Right ventricle myocardium inferior (tissue), 1 donor: ENCODE measurements at regions of chr2 and their contacts with region 1.

Region 1: DNA sequence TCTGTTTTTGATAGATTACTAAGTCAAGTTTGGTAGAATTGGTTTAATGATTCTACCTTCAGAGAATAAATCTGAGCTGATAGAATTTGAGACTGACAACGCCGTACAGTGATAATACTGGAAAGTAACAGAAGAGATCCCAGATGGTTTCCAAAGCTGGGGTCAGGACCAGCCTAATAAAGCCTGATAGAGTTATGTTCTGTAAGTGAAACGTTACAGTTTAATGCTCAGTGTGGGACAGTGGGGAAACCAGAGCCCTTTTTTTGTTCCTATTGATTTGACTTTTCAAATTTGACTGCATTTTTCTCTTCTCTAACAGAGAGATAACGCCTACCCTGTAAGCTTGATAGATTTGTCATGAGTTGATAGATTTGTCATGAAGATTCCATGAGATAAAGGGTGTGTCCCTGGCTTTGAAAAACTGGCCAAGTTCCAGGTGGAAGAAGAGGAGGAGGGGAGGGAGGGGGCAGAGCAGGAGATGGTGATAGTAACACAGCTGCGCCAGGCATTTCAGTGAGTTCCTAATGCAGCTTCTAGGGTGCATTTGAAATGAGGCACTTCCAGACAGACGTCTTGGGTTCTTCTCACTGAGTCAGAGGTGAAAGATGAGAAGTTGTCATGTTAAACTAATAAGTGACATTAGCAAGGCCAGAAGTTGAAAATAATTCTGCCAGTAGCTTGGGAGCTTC is 65.1 kb downstream of the CERS6 start:
- DNase-seq: no peak
- ATAC-seq: peak; percentile 42

Region 2: GRCh38 chr2:168758970-168759820 is 238.0 kb after region 1 on chr2:
- intact Hi-C with region 1: loop called (anchors 10 kb)
- DNase-seq: no peak
- ATAC-seq: peak; percentile 58